AG04449 (cell line): ENCODE measurements at regions of chr4 and their contacts with region 1.

Region 1: DNA sequence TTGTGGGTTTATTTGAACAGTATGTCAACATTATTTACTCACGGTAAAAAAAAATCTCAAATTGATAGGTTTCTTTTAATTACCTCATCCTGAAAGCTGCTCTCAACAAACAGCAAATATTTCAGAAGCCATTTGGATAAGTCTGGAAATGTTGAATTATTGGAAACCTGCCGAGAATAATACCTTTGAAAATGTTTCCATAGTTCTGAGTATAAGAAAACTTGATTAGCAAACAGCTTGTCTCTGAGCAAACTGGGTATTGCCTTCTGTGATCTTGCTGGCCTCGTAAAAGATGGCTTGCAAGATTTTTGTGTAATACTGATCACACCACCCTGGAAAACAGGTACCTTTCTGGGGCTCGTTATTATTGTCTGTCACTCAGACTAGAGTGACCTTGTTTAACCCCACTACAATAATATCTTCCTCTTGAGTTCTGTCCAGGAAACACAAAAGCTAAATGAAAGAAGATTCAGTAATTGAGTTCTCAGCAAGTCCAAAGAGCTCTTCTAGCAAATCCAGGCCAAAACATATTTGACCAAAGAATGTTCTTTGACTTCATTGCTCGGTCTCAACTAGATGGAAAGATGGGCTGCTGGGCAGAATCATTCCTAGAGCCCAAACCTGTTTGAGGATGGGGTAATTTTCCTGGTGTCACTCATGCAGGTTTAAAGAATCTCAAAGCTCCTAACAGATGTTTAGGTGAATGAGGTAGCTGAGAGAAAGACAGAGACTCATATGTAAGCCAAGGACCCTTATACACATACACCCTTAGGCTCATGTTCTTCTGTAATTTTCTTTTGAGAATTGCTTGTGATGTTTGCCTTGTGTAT is 255.6 kb upstream of the JADE1 start:
- DNase-seq: no peak
- H3K4me3 ChIP-seq: peak overlapping the region; percentile 65; the same call in 1 of the 2 replicates
- CTCF ChIP-seq: no peak

Region 2: DNA sequence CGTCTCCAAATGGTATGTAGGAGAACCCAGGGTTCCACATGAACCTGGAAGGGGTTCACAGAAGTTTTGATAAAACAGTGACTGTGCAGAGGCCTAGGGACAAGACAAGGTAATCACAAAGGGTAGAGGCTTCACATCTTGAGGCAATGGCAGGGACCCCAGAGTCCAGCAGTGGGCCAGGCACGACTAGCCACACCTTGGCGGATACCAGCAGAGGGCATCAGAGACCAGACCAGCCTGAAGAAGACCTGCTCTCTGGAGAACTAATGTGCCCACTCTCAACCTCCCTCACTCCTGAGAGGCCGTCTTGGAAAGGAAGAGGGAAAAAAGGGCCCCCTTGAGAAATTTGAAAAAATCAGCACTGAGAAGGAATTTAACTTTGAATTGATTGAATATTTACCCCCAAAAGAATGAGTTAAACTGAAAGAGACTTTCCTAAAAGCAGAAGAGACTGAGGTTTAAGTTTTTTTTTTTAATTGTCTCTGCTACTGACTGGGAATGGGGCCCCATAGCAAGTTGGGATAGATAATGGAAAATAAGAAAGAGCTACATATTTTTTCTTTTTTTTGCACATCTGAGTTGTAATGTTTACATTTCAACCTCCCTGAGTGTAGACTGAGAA is 11.8 kb after region 1 on chr4:
- CTCF ChIA-PET with region 1: interaction called, 10 read pairs
- POLR2A ChIA-PET with region 1: interaction called, 4 read pairs
- DNase-seq: no peak
- H3K4me3 ChIP-seq: no peak overlapping the region
- CTCF ChIP-seq: peak; percentile 49